Panc1 (cell line): ENCODE measurements at regions of chr1 and their contacts with region 1.

Region 1: DNA sequence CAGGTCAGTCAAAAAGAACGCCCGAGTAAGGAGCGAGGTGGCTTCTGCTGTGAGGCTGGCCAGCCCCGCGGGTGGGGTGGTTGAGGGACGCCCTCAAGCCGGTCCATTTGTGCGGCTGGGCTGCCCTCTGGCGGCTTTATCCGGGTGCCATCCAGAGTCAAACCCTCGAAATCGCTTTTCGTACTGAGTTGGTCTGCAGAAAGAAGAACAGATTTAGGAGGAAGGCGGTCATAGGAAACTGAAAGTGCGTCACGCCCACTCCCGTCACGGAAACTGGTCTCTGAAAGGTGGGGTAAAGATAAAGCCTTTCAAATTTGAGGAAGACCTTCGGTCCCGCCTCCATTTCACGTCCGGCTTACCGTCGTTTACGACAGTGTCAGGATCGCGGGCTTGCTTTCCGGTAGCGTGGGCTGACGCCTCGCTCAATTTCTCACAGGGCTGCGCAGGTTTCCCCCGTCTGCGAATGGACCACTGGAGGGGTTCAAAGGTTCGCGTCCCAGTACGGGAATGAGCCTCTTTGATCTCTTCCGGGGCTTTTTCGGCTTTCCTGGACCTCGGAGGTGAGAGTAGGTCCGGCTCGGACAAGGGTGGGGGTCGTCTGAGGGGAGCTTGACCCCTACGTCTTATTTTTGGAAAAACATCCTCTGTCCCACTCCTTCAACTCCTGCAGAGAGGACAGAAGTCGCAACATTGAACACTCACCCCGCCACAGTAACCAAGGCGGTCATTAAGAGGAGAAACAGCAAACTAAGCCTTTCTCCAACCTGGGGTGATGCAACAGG is at the start of gene HAX1:
- DNase-seq: peak; percentile 88
- ATAC-seq: peak; percentile 95
- H3K4me3 ChIP-seq: peak within 1 kb of the TSS; percentile 96 to 100
- H3K27ac ChIP-seq: peak within 1 kb of the TSS; percentile 97
- H3K4me1 ChIP-seq: peaks cover 5% of the 10 kb centered on the region; the same call in 1 of the 2 replicates
- H3K27me3 ChIP-seq: no peaks in the 10 kb centered on the region
- CTCF ChIP-seq: peak; percentile 86
- total RNA-seq, gene HAX1: 110 TPM

Region 2: DNA sequence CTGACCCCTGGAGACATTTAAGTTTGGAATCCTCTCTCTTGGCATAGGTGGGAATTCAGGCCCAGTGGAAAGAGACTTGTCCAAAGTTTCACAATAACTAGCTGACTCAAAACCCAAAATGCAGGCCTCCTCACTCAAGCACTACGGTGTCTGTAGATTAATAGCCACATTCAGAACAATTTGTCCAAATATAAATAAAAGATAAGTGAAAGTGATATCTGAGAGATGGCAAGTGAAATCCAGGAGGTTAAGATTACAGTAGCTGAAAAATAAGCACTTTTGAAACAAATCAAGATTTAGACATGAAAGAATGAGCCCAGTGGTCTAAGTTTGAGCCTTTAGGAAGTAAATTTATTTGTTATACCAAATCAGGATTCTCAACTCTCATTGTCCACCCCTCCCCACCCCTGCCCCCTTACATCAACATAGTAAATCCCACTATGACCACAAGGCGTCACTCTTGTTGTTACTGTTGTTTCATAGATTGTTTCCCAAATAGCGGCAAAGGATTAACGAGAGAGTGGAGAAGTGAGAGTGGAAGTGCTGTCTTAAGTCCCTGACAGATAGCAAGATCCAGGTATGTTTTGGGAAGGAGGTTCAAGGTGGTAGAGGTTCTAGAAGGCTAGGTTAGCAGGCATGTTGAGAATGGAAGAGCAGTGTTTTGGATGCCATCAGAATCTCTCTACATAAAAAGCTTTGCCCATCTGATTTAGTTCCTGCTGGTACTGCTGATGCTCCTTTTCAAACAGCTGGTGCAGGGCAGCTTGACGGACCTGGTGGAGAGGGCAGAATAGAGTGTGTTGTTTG is 73.4 kb before region 1 on chr1:
- CTCF ChIA-PET with region 1: no interaction called
- POLR2A ChIA-PET with region 1: no interaction called
- in situ Hi-C with region 1: no loop called
- intact Hi-C with region 1: loop called (anchors 1 kb)
- DNase-seq: no peak
- ATAC-seq: peak; percentile 87
- H3K4me3 ChIP-seq: peak overlapping the region in 1 of 2 experiments; percentile 13; a peak in 1 of 4 replicates
- H3K27ac ChIP-seq: no peak overlapping the region
- H3K4me1 ChIP-seq: 0 out of 2 replicates have a peak, but pooled peaks cover 2% of the 10 kb centered on the region
- H3K27me3 ChIP-seq: no peaks in the 10 kb centered on the region
- CTCF ChIP-seq: peak; percentile 80

Region 3: DNA sequence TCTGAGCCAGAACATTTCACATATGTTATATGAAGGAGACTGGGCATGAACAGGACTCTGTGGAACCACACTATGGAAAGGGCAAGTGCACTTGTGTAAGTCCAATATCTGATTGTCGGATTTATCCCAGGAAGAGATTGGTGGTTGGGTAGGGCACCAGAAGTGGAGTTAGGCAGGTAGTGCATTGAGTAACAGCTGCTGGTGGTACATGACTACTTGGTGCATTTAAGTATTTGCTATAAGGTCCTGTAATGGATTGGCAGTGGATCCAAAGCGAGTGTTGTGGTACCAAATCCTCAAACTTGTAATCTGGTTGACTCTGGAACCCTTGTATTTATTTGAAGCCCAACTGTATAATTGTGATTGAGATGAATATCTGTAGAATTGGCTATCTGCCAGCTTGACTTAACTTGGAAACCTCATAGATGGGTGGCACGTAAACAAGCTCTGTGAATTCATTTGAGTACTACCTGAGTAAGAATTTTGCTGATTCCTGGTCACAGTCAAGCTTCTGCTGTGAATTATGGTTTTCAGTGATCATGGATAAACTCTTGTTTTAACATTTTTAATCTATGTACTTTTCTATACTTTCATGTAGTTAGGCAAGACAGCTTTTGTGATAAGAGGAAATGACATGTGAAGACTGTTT is 30.6 kb before region 1 on chr1:
- CTCF ChIA-PET with region 1: no interaction called
- POLR2A ChIA-PET with region 1: interaction called, 13 read pairs
- in situ Hi-C with region 1: no loop called
- intact Hi-C with region 1: no loop called
- DNase-seq: no peak
- ATAC-seq: no peak
- H3K4me3 ChIP-seq: no peak overlapping the region
- H3K27ac ChIP-seq: no peak overlapping the region
- H3K4me1 ChIP-seq: no peaks in the 10 kb centered on the region
- H3K27me3 ChIP-seq: no peaks in the 10 kb centered on the region
- CTCF ChIP-seq: no peak

Region 4: GRCh38 chr1:154335025-154335714 is 62.8 kb after region 1 on chr1:
- CTCF ChIA-PET with region 1: interaction called, 11 read pairs
- POLR2A ChIA-PET with region 1: no interaction called
- in situ Hi-C with region 1: no loop called
- intact Hi-C with region 1: no loop called
- DNase-seq: no peak
- ATAC-seq: peak; percentile 89
- H3K4me3 ChIP-seq: no peak overlapping the region
- H3K27ac ChIP-seq: no peak overlapping the region
- H3K4me1 ChIP-seq: no peaks in the 10 kb centered on the region
- H3K27me3 ChIP-seq: no peaks in the 10 kb centered on the region
- CTCF ChIP-seq: peak; percentile 95

Region 5: GRCh38 chr1:154379301-154379700 is 106.9 kb after region 1 on chr1:
- CTCF ChIA-PET with region 1: no interaction called
- POLR2A ChIA-PET with region 1: no interaction called
- in situ Hi-C with region 1: no loop called
- intact Hi-C with region 1: no loop called
- DNase-seq: no peak
- ATAC-seq: no peak
- H3K4me3 ChIP-seq: no peak overlapping the region
- H3K27ac ChIP-seq: no peak overlapping the region
- H3K4me1 ChIP-seq: no peaks in the 10 kb centered on the region
- H3K27me3 ChIP-seq: no peaks in the 10 kb centered on the region
- CTCF ChIP-seq: no peak

Region 6: DNA sequence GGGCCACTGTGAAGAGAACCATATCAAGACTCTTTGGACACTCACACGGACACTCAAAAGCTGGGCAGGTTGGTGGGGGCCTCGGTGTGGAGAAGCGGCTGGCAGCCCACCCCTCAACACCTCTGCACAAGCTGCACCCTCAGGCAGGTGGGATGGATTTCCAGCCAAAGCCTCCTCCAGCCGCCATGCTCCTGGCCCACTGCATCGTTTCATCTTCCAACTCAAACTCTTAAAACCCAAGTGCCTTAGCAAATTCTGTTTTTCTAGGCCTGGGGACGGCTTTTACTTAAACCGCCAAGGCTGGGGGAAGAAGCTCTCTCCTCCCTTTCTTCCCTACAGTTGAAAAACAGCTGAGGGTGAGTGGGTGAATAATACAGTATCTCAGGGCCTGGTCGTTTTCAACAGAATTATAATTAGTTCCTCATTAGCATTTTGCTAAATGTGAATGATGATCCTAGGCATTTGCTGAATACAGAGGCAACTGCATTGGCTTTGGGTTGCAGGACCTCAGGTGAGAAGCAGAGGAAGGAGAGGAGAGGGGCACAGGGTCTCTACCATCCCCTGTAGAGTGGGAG is 193.3 kb after region 1 on chr1:
- CTCF ChIA-PET with region 1: no interaction called
- POLR2A ChIA-PET with region 1: interaction called, 12 read pairs
- in situ Hi-C with region 1: no loop called
- intact Hi-C with region 1: no loop called
- DNase-seq: no peak
- ATAC-seq: no peak
- H3K4me3 ChIP-seq: no peak overlapping the region
- H3K27ac ChIP-seq: no peak overlapping the region
- H3K4me1 ChIP-seq: peaks cover 7% of the 10 kb centered on the region
- H3K27me3 ChIP-seq: no peaks in the 10 kb centered on the region
- CTCF ChIP-seq: no peak